ENCODE measurements at regions of chr16 and their contacts with region 1.

Region 1: DNA sequence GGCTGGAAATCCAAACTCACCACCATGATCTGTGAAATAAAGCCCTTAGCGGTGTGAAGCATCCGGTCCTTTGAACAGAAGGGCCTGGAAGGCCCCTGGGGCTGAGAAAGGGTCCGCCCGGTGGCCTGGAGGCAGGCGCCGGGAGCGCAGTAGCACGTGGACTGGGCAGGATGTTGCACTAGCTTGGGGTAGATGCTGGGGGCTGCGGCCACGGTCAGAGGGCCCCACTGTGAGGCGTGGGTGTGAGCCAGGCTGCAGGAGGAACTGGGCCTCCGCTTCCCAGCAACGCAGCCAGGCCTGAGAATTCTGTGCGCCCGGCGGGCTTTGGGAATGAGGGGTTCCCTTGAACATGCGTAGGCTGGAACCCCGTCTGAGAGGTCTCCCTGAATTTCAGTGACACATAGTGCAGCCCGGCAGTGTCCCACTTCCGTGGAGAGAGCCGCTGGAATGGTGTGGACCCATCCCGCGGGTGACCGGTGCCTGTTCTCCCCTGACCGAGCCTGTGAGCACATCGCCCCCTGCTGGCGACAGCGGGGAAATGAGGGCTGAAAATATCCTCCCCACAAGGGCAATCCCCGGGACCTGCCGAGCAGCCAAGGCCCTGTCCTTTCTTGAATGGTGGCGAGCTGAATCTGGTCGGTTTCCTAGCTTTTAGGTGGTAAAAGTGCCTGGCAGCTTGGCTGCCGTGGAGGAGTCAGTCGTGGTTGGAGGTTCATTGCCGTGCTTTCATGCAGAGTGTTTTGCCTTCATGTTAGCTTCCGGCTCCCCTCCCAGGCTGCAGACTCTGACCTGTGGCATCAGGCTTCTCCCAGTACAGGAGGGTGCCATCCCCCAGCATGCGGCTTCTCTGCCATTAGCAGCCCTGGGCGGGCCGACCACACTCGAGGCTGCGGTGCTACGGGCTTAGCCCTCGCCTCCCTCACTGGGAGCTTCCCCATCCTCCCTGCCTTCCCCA is 43.8 kb downstream of the DNAJA2 start:
- DNase-seq: peak; percentile 84
- CTCF ChIP-seq: peak; percentile 96

Region 2: GRCh38 chr16:46673320-46674013 is 256.2 kb before region 1 on chr16:
- in situ Hi-C with region 1: loop called (anchors 10 kb)
- DNase-seq: peak; percentile 47
- CTCF ChIP-seq: peak; percentile 96